Heart left ventricle (tissue), 16 donors: ENCODE measurements at regions of chr20 and their contacts with region 1.

Region 1: GRCh38 chr20:46363800-46364634 is 42.4 kb downstream of the ELMO2 start:
- DNase-seq: peak; percentile 88 to 95 (median 90)
- ATAC-seq: peak; percentile 83 to 96 (median 93)
- H3K4me3 ChIP-seq: peak overlapping the region; percentile 80 to 99 (median 91)
- H3K27ac ChIP-seq: peak overlapping the region; percentile 94 to 99 (median 97)
- H3K4me1 ChIP-seq: peaks cover under 1 to 56% (median 40%) of the 10 kb centered on the region in 12 donors
- H3K27me3 ChIP-seq: no peaks in the 10 kb centered on the region
- CTCF ChIP-seq: no peak
- POLR2A ChIP-seq: peak; percentile 40 to 89

Region 2: GRCh38 chr20:46022411-46023147 is 341.4 kb before region 1 on chr20:
- intact Hi-C with region 1: loop called in 2 of 10 experiments (anchors 10 kb)
- DNase-seq: peak; percentile 46 to 84 (median 60)
- ATAC-seq: peak in 3 of 4 donors; percentile 54 to 73 (median 55)
- H3K4me3 ChIP-seq: peak overlapping the region in 5 of 12 donors; percentile 7 to 59 (median 15)
- H3K27ac ChIP-seq: no peak overlapping the region
- H3K4me1 ChIP-seq: peaks cover 0 to 21% (median 7%) of the 10 kb centered on the region in 12 donors
- H3K27me3 ChIP-seq: peaks cover 9 to 94% (median 51%) of the 10 kb centered on the region in 9 donors
- CTCF ChIP-seq: peak; percentile 47 to 72 (median 64)
- POLR2A ChIP-seq: no peak

Region 3: GRCh38 chr20:46375771-46376170 is 11.8 kb after region 1 on chr20:
- intact Hi-C with region 1: no loop called
- DNase-seq: no peak
- ATAC-seq: peak in 1 of 4 donors; percentile 29
- H3K4me3 ChIP-seq: no peak overlapping the region
- H3K27ac ChIP-seq: no peak overlapping the region
- H3K4me1 ChIP-seq: no peaks in the 10 kb centered on the region
- H3K27me3 ChIP-seq: no peaks in the 10 kb centered on the region
- CTCF ChIP-seq: no peak
- POLR2A ChIP-seq: no peak

Region 4: DNA sequence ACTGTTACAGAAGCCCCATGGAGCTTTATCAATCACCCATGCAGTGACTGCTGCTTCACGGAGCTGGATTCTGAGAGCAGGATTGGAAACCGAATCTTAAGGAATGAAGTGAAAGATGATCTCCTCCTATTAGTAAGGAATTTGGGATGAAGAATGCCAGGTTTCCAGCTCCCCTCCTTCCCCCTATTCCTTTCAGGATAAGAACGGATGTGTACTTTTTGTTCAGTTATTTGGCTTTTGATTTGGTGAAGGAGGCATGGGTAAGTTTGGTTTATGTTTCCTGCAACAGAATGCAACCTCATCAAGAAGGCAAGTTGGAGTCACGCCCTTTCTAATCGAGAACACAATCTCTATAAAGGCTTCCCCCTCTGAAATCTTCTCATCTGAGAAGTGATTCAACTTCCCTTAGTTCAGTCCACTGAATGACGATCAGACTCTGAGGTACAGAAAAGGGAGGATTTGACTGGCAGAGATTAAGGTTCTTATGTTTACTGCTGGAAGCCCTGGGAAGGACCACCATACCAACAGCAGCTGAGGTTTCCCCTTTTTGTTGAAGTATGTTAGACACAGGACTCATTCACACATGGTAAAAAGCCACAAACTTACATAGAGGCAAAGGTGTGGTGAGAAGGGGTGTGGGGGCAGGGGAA is 36.9 kb after region 1 on chr20:
- intact Hi-C with region 1: loop called in 6 of 10 experiments (anchors 1 to 5 kb)
- DNase-seq: no peak
- ATAC-seq: peak in 1 of 4 donors; percentile 39
- H3K4me3 ChIP-seq: peak overlapping the region in 8 of 12 donors; percentile 3 to 41 (median 20)
- H3K27ac ChIP-seq: peak overlapping the region; percentile 41 to 91 (median 76)
- H3K4me1 ChIP-seq: peaks cover 27 to 97% (median 65%) of the 10 kb centered on the region in 12 donors
- H3K27me3 ChIP-seq: no peaks in the 10 kb centered on the region
- CTCF ChIP-seq: no peak
- POLR2A ChIP-seq: no peak

Region 5: GRCh38 chr20:46406199-46406985 is 42.4 kb after region 1 on chr20 and contains the start of gene ELMO2:
- intact Hi-C with region 1: loop called in 6 of 10 experiments (anchors 1 to 5 kb)
- DNase-seq: peak; percentile 98 to 99 (median 98)
- ATAC-seq: peak; percentile 93 to 98 (median 96)
- H3K4me3 ChIP-seq: peak within 1 kb of the TSS; percentile 51 to 99 (median 80)
- H3K27ac ChIP-seq: peak within 1 kb of the TSS; percentile 74 to 99 (median 95)
- H3K4me1 ChIP-seq: peaks cover 14 to 62% (median 44%) of the 10 kb centered on the region in 12 donors
- H3K27me3 ChIP-seq: no peaks in the 10 kb centered on the region
- CTCF ChIP-seq: peak; percentile 4 to 55 (median 24)
- POLR2A ChIP-seq: peak in 1 of 2 donors; percentile 78
- total RNA-seq, gene ELMO2: 22.7 to 57.5 (median 34.5) TPM

Region 6: GRCh38 chr20:46562373-46563169 is 198.6 kb after region 1 on chr20:
- intact Hi-C with region 1: loop called in 1 of 10 experiments (anchors 5 kb)
- DNase-seq: peak in 4 of 5 donors; percentile 48 to 77 (median 62)
- ATAC-seq: peak; percentile 79 to 88 (median 84)
- H3K4me3 ChIP-seq: peak overlapping the region in 11 of 12 donors; percentile 16 to 55 (median 41)
- H3K27ac ChIP-seq: peak overlapping the region in 8 of 12 donors; percentile 4 to 70 (median 50)
- H3K4me1 ChIP-seq: peaks cover 0 to 20% (median 8%) of the 10 kb centered on the region in 12 donors
- H3K27me3 ChIP-seq: no peaks in the 10 kb centered on the region
- CTCF ChIP-seq: peak; percentile 85 to 97 (median 92)
- POLR2A ChIP-seq: no peak

Region 7: GRCh38 chr20:46573234-46573633 is 209.2 kb after region 1 on chr20:
- intact Hi-C with region 1: no loop called
- DNase-seq: no peak
- ATAC-seq: peak in 2 of 4 donors; percentile 10 to 14
- H3K4me3 ChIP-seq: no peak overlapping the region
- H3K27ac ChIP-seq: no peak overlapping the region
- H3K4me1 ChIP-seq: peaks cover 0 to 22% (median 7%) of the 10 kb centered on the region in 12 donors
- H3K27me3 ChIP-seq: no peaks in the 10 kb centered on the region
- CTCF ChIP-seq: no peak
- POLR2A ChIP-seq: no peak